Mammary epithelial cell (primary cell): ENCODE measurements at regions of chr2 and their contacts with region 1.

Region 1: DNA sequence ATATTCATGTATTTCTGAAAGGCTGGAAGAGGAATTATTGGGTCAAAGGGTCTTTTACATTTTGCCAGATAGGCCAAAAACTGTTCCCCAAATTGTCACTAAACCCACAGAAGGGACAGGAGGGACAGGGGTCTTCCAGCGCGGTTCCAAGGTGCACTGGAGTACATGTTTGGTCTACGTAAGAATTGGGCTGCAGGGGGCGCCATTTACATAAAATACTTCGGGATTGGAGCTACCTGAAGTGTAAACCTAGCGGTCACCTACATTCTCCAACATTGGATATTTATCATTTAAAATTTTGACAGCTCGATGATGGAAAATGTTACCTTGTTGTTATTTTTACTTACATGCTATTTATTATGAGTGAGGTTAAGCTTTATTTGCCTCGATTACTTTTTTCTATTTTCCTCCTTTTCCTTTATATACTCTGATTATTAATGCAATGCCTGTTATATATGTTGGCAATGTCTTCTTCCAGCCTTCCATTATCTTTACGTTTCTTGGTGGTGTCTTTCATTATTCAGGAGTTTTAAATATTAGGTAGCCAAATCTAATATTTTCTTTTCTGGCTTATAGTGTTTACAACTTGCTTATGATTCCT is 43.0 kb upstream of the RAB6C start:
- DNase-seq: no peak
- H3K4me3 ChIP-seq: no peak overlapping the region
- H3K27ac ChIP-seq: no peak overlapping the region
- H3K4me1 ChIP-seq: no peaks in the 10 kb centered on the region
- H3K27me3 ChIP-seq: no peaks in the 10 kb centered on the region
- CTCF ChIP-seq: peak; percentile 36 to 60

Region 2: DNA sequence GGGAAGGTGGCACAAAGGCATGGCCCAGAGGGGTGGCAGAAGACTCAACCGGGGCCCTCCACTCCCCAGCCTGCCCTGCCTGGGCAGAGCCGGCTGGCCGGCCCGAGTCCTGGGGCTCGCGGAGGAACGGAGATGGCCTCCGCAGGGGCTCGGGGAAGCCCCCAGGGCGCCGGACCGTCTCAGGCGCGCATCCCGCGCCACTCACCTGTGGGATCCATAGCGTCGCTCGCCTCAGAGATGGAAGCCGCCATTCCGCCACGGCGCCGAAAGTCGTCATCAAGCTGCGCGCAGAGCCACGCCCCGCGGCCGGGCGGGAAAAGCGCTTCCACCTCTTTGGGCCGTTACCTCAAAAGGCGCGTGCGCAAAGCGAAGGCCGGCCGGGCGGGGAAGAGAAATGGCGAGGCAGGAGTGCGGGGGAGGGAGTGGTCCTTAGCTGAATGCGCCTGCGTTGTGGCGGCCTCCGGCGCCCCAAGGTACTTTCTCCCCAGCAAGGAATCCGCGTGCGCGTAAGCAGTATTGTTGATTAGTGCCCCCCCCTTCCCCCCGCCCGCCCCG is 245.0 kb after region 1 on chr2 and contains the start of gene SMPD4:
- CTCF ChIA-PET with region 1: no interaction called
- dilution Hi-C with region 1: no loop called
- in situ Hi-C with region 1: no loop called
- intact Hi-C with region 1: loop called (anchors 2 kb)
- DNase-seq: peak; percentile 95
- H3K4me3 ChIP-seq: peak within 1 kb of the TSS; percentile 73 to 99 (median 99)
- H3K27ac ChIP-seq: peak within 1 kb of the TSS; percentile 89
- H3K4me1 ChIP-seq: peaks cover 13% of the 10 kb centered on the region
- H3K27me3 ChIP-seq: no peaks in the 10 kb centered on the region
- CTCF ChIP-seq: no peak
- total RNA-seq, gene SMPD4: 21.8 to 69.3 TPM

Region 3: GRCh38 chr2:130342533-130343275 is 406.3 kb after region 1 on chr2 and contains the start of gene IMP4:
- CTCF ChIA-PET with region 1: no interaction called
- dilution Hi-C with region 1: no loop called
- in situ Hi-C with region 1: loop called (anchors 10 to 25 kb)
- intact Hi-C with region 1: no loop called
- DNase-seq: peak; percentile 99
- H3K4me3 ChIP-seq: peak within 1 kb of the TSS; percentile 75 to 89 (median 87)
- H3K27ac ChIP-seq: peak within 1 kb of the TSS; percentile 77
- H3K4me1 ChIP-seq: peaks cover 11% of the 10 kb centered on the region
- H3K27me3 ChIP-seq: no peaks in the 10 kb centered on the region
- CTCF ChIP-seq: peak in 1 of 2 donors; percentile 55
- total RNA-seq, gene IMP4: 81.6 to 83.9 TPM

Region 4: DNA sequence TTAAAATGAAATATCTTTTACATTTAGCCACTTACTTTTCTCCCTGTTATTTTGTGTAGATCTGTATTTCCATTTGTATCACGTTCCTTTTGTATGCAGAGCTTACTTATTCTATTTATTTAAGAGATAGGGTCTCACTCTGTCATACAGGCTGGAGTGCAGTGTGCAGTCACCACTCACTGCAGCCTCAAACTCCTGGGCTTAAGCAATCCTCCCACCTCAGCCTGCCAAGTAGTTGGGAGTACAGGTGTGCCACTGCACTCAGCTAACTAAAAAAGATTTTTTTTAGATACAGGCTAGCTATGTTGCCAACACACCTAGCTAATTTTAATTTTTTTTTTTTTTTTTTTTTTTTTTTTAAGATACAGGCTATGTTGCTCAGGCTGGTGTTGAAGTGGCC is 430.3 kb after region 1 on chr2:
- CTCF ChIA-PET with region 1: interaction called, 15 read pairs
- dilution Hi-C with region 1: no loop called
- in situ Hi-C with region 1: no loop called
- intact Hi-C with region 1: no loop called
- DNase-seq: no peak
- H3K4me3 ChIP-seq: no peak overlapping the region
- H3K27ac ChIP-seq: no peak overlapping the region
- H3K4me1 ChIP-seq: peaks cover 4% of the 10 kb centered on the region
- H3K27me3 ChIP-seq: no peaks in the 10 kb centered on the region
- CTCF ChIP-seq: no peak